BJ (cell line): ENCODE measurements at regions of chr17 and their contacts with region 1.

Region 1: GRCh38 chr17:72725433-72726068 is 366.9 kb downstream of the SLC39A11 start:
- DNase-seq: no peak
- H3K4me3 ChIP-seq: no peak overlapping the region
- H3K27me3 ChIP-seq: no peaks in the 10 kb centered on the region
- CTCF ChIP-seq: peak; percentile 97

Region 2: DNA sequence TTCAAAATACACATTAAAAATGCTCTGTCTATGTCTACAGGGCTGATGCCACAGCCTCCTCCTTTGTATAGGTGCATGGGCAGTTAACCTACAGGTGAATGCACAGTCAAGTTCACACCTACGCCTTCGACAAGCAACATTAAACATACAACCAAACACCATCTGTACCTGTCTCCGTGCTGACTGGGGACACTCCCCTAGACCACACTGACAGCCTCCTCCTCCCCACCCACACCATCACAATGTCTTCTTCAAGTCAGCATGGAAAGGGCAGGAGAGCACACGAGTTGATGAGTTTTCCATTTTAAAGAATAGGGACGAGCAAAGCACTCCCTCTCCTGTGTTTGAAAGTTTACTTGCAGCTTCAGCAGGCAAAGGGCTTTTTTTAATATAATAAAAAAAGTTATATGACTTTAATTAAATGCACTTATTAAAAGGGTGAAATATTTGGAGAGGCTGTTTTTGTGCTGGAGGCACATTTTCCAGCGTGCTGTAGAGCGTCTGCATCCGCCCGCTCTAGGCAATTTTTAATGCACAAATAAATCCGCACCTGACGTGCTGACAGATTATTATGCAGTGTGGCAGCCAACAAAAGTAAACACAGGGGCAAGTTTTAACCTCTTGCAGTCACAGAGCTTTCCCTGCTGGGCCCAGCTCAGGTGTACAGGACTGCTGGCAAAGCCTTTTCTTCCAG is 236.9 kb before region 1 on chr17:
- CTCF ChIA-PET with region 1: no interaction called
- POLR2A ChIA-PET with region 1: no interaction called
- DNase-seq: no peak
- H3K4me3 ChIP-seq: no peak overlapping the region
- H3K27me3 ChIP-seq: no peaks in the 10 kb centered on the region
- CTCF ChIP-seq: no peak

Region 3: GRCh38 chr17:72592242-72592966 is 133.1 kb before region 1 on chr17:
- CTCF ChIA-PET with region 1: interaction called, 16 read pairs
- POLR2A ChIA-PET with region 1: no interaction called
- DNase-seq: no peak
- H3K4me3 ChIP-seq: peak overlapping the region; percentile 83
- H3K27me3 ChIP-seq: no peaks in the 10 kb centered on the region
- CTCF ChIP-seq: no peak

Region 4: DNA sequence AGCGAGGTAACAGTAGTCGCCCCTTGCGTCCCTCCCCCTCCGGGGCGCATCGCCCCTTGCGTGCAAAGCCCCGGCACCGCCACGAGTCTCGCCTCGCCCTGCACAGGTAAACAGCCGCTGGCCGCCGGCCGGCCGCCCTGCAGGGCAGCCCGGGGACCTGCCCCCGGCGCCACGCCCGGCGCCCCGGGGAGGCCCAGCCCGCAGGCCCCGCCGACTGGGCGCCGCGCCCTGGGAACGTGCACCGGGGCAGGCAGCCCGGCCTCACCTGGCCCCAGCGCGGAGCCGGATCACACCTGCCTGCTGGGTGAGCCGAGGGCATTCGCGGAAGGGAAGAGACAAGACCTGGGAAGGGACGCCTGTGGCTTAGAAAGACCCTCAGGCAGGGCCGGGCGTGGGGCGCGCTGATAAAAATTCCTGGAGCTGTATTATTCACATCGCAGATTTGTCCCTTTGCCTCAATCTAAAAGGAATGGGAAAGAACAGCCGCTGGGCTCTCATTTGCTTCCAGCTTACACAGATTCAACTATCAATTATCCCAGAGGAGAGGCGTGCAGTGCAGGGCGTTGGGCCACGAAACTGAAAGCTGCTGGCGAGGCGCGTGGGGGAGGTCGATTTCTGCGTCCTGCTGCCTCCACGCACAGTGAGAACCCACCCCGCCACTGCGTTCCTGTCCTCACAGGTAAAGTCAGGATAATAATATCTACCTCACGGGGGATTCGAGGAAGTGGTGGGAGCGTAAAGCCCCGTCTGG is 85.0 kb before region 1 on chr17:
- CTCF ChIA-PET with region 1: no interaction called
- POLR2A ChIA-PET with region 1: no interaction called
- DNase-seq: no peak
- H3K4me3 ChIP-seq: no peak overlapping the region
- H3K27me3 ChIP-seq: peaks cover 2% of the 10 kb centered on the region; the same call in 1 of the 2 replicates
- CTCF ChIP-seq: no peak

Region 5: GRCh38 chr17:72812823-72813222 is 87.3 kb after region 1 on chr17:
- CTCF ChIA-PET with region 1: no interaction called
- POLR2A ChIA-PET with region 1: no interaction called
- DNase-seq: no peak
- H3K4me3 ChIP-seq: no peak overlapping the region
- H3K27me3 ChIP-seq: no peaks in the 10 kb centered on the region
- CTCF ChIP-seq: no peak

Region 6: DNA sequence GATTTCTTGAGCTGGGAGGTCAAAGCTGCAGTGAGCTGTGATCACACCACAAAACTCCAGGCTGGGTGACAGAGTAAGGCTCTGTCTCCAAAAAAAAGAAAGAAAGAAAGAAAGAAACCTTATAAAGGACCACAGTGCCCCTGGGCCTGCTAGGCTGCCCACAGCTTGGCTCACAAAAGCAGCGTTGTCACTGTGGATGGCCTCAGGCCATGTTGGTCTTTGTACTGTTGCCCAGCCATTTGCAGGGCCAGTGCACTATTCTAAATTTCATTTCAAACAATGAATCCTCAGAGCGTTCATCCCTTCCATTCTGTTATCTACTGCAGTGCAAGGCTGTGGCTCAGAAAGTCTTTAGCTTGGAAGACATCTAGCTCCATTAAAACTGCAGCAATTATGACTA is 158.5 kb after region 1 on chr17:
- CTCF ChIA-PET with region 1: no interaction called
- POLR2A ChIA-PET with region 1: no interaction called
- DNase-seq: no peak
- H3K4me3 ChIP-seq: no peak overlapping the region
- H3K27me3 ChIP-seq: no peaks in the 10 kb centered on the region
- CTCF ChIP-seq: no peak

Region 7: GRCh38 chr17:72985881-72986720 is 260.6 kb after region 1 on chr17:
- CTCF ChIA-PET with region 1: interaction called, 44 read pairs
- POLR2A ChIA-PET with region 1: no interaction called
- DNase-seq: no peak
- H3K4me3 ChIP-seq: no peak overlapping the region
- H3K27me3 ChIP-seq: no peaks in the 10 kb centered on the region
- CTCF ChIP-seq: peak; percentile 86

Region 8: DNA sequence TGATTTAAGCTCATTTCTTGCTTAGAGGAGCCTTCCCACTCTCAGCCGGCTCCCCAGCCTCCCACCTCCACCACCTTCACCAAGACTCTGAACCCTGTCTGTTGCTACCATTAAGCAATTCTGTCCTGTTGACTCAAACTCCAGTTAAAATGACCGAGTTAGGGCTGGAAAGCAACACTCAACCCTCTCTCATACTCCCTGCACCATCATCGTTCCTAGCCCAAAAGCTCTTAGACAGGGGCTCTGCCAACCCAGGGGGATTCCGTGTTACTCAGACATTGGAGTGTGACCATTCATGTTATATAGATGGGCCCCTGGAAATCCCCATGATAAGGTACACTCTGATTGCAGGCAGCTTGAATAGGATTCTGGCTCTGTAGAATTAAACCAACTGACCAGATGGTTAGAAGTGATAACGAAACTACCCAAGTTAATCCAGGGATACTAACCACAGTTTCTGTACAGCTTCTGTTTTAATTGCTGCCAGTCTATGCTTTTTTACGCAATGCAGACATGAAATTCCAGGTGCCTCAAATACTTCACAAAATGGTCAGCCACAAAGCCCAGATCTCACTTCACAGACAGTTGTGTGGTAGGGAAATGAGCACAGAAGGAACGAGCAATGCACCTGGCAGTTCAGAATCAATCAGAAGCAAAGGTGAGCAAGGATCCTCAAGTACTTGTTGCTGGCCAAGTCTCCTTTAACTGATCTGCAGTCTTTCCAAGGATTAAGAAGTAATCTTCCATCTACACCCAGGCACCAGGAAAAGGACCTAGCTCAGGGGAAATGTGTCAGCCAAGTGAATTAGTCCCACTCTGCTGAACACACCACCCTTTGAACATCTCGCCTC is 441.4 kb after region 1 on chr17:
- CTCF ChIA-PET with region 1: interaction called, 16 read pairs
- POLR2A ChIA-PET with region 1: no interaction called
- DNase-seq: no peak
- H3K4me3 ChIP-seq: no peak overlapping the region
- H3K27me3 ChIP-seq: peaks cover 46% of the 10 kb centered on the region
- CTCF ChIP-seq: no peak

Region 9: DNA sequence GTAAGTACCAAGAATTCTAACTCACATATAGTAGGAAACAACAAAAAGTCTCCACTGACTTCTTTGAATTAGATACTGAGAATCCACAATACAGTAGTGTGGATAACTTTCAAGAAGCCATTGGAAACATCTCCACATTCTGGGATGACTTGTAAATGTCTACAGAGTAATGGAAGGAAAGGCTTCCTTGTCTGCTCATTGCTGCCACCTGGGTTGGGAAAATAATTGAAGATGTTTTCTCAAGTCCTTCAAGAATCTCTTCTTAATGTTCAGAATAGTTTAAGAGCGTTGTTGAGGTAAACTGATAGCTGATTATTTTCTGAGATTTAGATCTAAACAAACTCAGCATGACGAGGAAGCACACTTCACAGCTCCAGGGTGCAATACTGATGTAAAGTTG is 522.2 kb after region 1 on chr17:
- CTCF ChIA-PET with region 1: interaction called, 23 read pairs
- POLR2A ChIA-PET with region 1: no interaction called
- DNase-seq: no peak
- H3K4me3 ChIP-seq: no peak overlapping the region
- H3K27me3 ChIP-seq: no peaks in the 10 kb centered on the region; the same call in 1 of the 2 replicates
- CTCF ChIP-seq: peak; percentile 37

Region 10: DNA sequence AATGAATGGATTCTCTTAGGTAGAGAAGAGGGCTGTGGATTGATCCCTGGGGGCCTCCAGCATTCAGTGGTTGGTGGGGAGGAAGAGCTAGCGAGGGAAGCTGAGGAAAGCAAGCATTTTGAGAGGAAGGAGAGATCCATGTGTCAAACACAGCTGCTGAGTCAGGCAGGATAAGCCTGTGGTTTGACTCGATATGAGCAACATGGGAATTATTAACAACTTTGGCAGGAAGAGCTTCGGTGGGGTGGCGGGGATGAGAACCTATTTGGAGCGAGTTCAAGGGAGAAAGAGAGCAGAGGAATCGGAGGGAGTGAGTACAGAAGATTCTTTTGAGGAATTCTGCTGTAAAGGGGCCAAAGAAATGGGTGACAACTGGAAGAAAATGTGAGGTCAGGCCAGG is 645.7 kb after region 1 on chr17:
- CTCF ChIA-PET with region 1: interaction called, 34 read pairs
- POLR2A ChIA-PET with region 1: no interaction called
- DNase-seq: peak; percentile 42
- H3K4me3 ChIP-seq: no peak overlapping the region
- H3K27me3 ChIP-seq: peaks cover 9% of the 10 kb centered on the region
- CTCF ChIP-seq: no peak